ENCODE measurements at regions of chr17 and their contacts with region 1.

Region 1: GRCh38 chr17:15966183-15966878 is 21.4 kb downstream of the ADORA2B start:
- DNase-seq: peak in 2 of 3 donors; percentile 71 to 79
- H3K4me3 ChIP-seq: peak overlapping the region in 5 of 7 experiments; percentile 13 to 51 (median 39)
- H3K27ac ChIP-seq: peak overlapping the region; percentile 52 to 85
- H3K4me1 ChIP-seq: peaks cover 0 to 47% (median 39%) of the 10 kb centered on the region in 4 experiments
- H3K27me3 ChIP-seq: no peaks in the 10 kb centered on the region

Region 2: DNA sequence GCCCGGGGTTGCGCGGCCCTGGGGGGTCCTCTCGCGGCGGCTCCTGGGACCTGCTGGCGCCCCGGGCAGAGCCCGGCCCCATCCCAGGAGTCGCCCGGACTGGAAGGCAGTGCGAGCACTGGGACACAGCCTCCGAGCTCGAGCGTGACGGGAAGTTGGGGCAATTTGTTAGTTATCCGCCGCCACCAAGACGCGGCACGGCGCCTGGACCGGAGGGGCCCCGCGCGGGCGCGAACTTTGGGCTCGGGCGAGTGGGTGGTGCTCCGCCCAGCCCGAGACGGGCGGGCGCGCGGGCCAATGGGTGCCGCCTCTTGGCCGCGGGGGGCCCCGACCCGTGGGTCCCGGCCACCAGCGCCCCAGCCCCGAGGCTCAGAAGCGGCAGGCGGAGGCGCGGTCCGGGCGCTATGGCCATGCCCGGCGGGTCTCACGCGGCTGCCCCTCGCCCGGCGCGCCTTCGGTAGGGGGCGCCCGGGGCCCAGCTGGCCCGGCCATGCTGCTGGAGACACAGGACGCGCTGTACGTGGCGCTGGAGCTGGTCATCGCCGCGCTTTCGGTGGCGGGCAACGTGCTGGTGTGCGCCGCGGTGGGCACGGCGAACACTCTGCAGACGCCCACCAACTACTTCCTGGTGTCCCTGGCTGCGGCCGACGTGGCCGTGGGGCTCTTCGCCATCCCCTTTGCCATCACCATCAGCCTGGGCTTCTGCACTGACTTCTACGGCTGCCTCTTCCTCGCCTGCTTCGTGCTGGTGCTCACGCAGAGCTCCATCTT is 21.4 kb before region 1 on chr17 and contains the start of gene ADORA2B:
- CTCF ChIA-PET with region 1: interaction called, 13 read pairs
- POLR2A ChIA-PET with region 1: interaction called, 4 read pairs
- DNase-seq: peak in 2 of 3 donors; percentile 73 to 77
- H3K4me3 ChIP-seq: peak within 1 kb of the TSS; percentile 36 to 86 (median 73)
- H3K27ac ChIP-seq: no peak within 1 kb of the TSS
- H3K4me1 ChIP-seq: peaks cover 0 to 49% (median 29%) of the 10 kb centered on the region in 4 experiments
- H3K27me3 ChIP-seq: peaks cover 0 to 22% (median 0%) of the 10 kb centered on the region in 5 experiments